Posterior cingulate gyrus (tissue), 11 donors: ENCODE measurements at regions of chr13 and their contacts with region 1.

Region 1: GRCh38 chr13:51452361-51453206 is at the start of gene INTS6:
- DNase-seq: peak in 9 of 10 donors; percentile 99 to 100 (median 100)

Region 2: GRCh38 chr13:51222037-51222685 is 230.4 kb before region 1 on chr13 and contains the start of gene FAM124A:
- intact Hi-C with region 1: loop called (anchors 5 kb)
- DNase-seq: peak; percentile 47 to 96 (median 56)

Region 3: DNA sequence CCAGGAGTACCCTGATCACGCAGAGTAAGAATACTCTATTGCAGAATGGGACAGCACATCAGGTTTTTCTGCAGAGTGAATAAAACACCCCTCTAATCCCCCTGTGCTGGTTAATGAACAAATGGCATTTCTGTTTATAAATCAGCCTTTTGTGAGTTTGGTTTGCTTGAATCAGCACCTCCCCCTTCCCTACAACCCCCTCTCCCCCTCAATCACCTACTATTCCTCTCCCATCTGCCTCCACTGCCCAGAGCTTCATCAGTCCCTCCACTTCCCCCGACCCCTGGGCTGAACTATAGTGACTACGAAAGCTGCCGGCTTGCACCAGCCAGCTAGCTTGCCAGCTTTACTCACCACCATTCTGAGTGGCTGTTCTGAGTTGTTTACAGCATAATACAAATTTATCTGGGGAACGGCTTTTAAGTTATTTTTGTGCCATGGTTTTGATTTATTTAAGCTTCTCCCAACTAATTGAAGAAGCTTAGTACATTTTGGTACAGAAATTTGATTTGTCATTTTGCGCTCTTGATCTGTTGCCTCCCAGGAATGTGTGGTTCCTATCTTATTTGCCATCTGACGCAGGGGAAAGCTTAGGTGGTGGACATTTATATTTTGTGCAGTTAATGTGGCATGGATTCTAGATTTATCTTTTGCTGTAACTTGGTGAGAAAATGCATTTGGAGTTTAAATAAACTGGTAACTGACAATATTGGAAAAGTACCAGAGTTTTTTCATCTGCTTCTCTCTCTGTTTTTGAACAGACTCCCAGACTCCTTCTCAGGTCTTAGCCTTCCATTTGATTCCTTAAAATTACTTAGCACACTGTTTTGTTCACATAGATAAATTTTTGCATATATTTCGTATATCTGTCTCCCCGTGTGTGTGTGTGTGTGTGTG is 90.0 kb after region 1 on chr13:
- intact Hi-C with region 1: loop called (anchors 5 kb)
- DNase-seq: peak in 2 of 10 donors; percentile 20 to 21

Region 4: DNA sequence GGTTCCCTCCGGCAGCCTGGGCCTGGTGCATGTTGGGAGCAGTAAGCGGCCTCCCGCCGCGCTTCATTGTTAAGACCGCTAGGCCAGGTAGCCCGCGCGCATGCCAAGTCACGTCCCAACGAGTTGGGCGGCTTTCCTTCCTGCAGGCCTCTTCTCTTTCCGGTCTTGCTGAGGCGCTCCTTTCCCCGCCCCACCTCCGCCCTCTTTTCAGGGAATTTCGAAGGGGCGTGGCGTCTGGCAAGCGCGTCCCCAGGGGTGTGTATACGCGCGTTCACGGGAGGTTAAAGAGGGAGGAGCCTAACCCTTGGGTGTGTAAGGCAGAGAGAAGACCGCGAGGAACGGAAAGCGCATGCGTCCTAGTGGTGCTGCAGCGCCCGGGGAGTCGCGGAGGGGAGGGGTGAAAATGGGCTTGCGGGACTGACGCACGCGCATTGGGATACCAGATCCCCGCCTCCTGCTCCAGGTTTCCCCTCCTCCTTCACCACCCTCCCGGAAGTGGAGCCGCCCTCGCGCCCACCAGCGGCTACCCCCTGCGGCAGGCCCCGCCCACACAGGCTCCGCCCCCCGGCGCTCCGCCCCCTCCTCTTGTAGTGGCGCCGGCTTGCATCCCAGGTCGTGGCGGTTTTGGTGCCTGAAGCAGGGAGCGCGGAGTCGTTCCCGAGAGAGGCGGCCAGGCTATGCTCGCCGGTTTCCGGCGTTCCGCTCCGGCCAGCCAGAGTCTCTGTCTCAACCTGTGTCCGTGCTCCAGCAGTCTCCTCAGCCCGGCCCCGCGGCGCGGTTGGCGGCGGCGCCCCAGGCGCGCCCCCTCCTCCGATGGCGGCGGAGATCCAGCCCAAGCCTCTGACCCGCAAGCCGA is 131.5 kb after region 1 on chr13 and contains the start of gene WDFY2:
- intact Hi-C with region 1: loop called (anchors 1 kb)
- DNase-seq: peak; percentile 98 to 100 (median 99)

Region 5: GRCh38 chr13:51729866-51730546 is 277.4 kb after region 1 on chr13:
- intact Hi-C with region 1: loop called (anchors 5 kb)
- DNase-seq: no peak

Region 6: DNA sequence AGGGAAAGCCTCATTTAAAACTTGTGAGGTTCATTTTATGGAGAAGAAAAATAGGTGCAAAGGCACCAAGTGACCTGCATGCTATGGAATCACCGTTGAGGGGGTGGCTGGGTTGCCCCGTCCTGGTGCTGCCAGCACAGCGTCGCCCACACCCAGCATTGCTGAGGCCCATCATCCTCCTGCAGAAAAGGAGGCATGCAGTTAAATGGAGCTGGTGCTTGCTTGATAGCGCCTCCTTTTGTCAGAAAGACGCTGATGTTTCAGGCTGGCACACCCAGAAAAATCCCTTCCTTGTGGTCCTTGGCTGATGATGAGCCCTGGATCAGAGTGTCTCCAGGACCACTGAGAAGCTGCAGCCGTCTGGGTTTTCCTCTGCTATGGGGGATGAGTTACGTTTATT is 314.5 kb after region 1 on chr13:
- intact Hi-C with region 1: no loop called
- DNase-seq: no peak

Region 7: GRCh38 chr13:51803422-51804294 is 351.1 kb after region 1 on chr13 and contains the start of gene DHRS12:
- intact Hi-C with region 1: loop called (anchors 1 kb)
- DNase-seq: peak; percentile 81 to 98 (median 88)